ENCODE measurements at regions of chr15 and their contacts with region 1.

Region 1: GRCh38 chr15:90902040-90902839 is 862 bp upstream of the MAN2A2 start:
- DNase-seq: peak; percentile 96

Region 2: DNA sequence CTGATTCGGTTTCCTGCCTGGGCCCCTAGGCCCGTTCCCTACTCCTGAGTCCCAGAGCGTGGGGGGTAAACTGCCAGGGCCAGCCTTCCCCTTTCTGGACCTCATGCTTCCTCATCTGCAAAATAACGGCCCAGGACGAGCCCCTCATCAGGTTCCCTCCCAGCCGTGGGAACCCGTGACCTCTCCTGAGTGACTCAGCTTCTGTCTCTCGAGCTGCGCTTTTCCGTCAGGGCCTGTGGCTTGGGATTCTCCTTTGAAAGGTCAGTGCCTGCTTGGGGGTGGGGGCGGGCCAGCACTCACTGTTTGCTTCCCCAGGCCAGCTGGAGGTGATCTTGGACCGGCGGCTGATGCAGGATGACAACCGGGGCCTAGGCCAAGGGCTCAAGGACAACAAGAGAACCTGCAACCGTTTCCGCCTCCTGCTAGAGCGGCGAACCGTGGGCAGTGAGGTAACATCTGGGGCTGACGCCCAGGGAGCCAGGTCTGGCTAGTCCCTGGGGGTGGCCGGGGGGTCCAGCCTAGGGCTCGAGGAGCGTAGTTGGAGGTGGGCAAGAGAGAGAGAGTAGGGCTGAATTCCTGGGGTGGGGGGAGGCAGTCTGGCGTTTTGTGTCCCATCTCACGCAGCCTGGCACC is 13.7 kb after region 1 on chr15:
- CTCF ChIA-PET with region 1: interaction called, 3 read pairs
- POLR2A ChIA-PET with region 1: interaction called, 16 read pairs
- DNase-seq: no peak

Region 3: DNA sequence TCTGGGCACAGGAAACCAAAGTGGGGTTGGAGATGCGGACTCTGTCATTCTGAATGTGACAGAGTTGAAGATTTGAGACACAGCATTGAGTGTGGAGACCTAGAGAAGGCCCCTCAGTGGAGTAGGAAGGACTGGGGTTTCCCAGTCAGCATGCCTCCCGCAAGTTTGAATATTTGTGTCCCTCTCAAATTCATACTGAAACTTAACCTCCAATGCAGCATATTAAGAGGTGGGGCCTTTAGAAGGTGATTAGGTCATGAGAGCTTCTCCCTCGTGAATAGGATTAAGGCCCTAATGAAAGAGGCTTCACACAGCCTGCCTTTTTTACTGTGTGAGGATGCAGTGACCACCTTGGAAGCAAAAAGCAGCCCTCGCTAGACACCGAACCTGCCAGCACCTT is 22.1 kb after region 1 on chr15:
- CTCF ChIA-PET with region 1: interaction called, 4 read pairs
- POLR2A ChIA-PET with region 1: interaction called, 142 read pairs
- DNase-seq: no peak

Region 4: DNA sequence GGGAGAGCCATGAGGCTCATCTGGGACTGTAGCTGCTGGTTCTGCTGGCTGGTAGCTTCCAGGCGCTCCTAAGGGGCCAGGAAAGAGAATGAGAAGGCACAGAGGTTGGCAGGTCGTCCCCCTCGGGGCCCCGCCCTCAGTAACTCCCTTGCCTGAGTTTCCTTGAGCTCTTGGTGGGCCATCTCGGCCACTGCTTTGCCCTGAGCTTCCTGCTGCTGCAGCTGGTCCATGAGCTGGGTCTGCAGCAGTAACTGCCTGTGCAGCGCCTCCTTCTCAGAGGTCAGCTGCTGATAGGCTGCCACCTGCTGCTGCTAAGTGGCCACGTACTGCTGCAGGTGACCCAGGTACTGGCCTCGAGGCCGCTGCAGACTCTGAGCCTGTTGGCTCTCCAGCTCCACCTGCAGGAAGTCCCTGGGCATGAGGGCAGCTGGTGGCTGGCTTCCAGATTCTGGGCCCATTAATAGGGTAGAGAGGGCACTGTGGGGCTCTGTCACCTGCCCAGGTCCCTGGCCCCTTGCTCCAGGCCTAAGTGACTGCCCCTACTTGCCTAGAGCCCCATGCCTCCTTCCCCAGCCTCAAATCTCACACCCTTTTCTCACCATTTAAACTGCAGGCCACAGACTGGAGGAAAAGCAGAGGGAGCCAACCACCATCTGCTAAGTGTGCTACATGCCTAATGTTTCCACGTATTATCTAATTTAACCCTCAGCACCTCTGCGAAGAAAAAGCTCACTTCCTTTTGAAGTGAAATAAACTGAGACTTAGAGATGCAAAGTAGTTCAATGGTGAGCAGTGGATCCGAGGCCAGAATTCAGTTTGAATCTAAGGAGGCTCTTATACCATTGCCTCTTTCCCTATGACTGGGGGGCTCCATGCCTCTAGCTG is 130.9 kb after region 1 on chr15:
- CTCF ChIA-PET with region 1: no interaction called
- POLR2A ChIA-PET with region 1: no interaction called
- DNase-seq: peak; percentile 48